Tibial artery (tissue), 4 donors: ENCODE measurements at regions of chr16 and their contacts with region 1.

Region 1: DNA sequence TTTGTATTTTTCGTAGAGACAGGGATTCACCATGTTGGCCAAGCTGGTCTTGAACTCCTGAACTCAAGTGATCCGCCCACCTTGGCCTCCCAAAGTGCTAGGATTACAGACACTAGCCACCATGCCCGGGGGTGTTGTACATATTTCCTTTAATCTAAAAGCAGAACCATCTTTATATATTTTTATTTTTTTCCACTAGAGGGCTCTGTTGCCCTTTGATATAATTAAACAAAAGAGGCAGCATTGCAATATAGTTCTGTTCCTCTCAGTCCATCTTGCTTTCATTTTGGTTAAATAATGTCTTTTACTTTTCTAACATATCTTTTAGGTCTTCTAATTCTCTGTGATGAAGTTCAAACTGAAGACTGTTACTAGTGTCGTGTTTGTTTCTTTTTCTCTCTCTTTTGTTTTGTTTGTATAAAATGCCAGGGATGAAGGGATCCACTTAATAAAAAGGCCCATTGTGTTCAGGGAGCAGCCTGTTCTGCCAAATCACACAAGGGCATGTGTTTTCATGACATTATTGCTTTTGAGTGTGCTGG is 23.4 kb downstream of the WWOX start:
- DNase-seq: no peak
- H3K4me3 ChIP-seq: peak overlapping the region in 1 of 2 donors; percentile 17
- H3K27ac ChIP-seq: peak overlapping the region; percentile 39 to 51
- H3K4me1 ChIP-seq: peaks cover 0 to 17% (median 12%) of the 10 kb centered on the region in 4 donors
- H3K27me3 ChIP-seq: no peaks in the 10 kb centered on the region
- CTCF ChIP-seq: peak; percentile 46 to 68

Region 2: GRCh38 chr16:78259873-78260272 is 137.0 kb after region 1 on chr16:
- intact Hi-C with region 1: no loop called
- DNase-seq: no peak
- H3K4me3 ChIP-seq: no peak overlapping the region
- H3K27ac ChIP-seq: no peak overlapping the region
- H3K4me1 ChIP-seq: peaks cover 0 to 15% (median 3%) of the 10 kb centered on the region in 4 donors
- H3K27me3 ChIP-seq: no peaks in the 10 kb centered on the region
- CTCF ChIP-seq: no peak

Region 3: GRCh38 chr16:78310990-78311561 is 188.2 kb after region 1 on chr16:
- intact Hi-C with region 1: no loop called
- DNase-seq: no peak
- H3K4me3 ChIP-seq: no peak overlapping the region
- H3K27ac ChIP-seq: no peak overlapping the region
- H3K4me1 ChIP-seq: no peaks in the 10 kb centered on the region
- H3K27me3 ChIP-seq: no peaks in the 10 kb centered on the region
- CTCF ChIP-seq: no peak

Region 4: GRCh38 chr16:78770353-78771091 is 647.7 kb after region 1 on chr16:
- intact Hi-C with region 1: loop called (anchors 5 kb)
- DNase-seq: peak; percentile 67 to 83
- H3K4me3 ChIP-seq: no peak overlapping the region
- H3K27ac ChIP-seq: no peak overlapping the region
- H3K4me1 ChIP-seq: peaks cover 0 to 8% (median 5%) of the 10 kb centered on the region in 4 donors
- H3K27me3 ChIP-seq: no peaks in the 10 kb centered on the region
- CTCF ChIP-seq: peak; percentile 59 to 85